PC-3 (cell line): ENCODE measurements at regions of chr3 and their contacts with region 1.

Region 1: GRCh38 chr3:149553781-149554451 is 79.4 kb downstream of the TM4SF4 start:
- DNase-seq: no peak
- ATAC-seq: no peak
- H3K4me3 ChIP-seq: peak overlapping the region; percentile 16; the same call in 1 of the 2 replicates
- H3K27ac ChIP-seq: peak overlapping the region; percentile 93
- H3K4me1 ChIP-seq: peaks cover 51% of the 10 kb centered on the region
- H3K27me3 ChIP-seq: no peaks in the 10 kb centered on the region
- CTCF ChIP-seq: no peak

Region 2: DNA sequence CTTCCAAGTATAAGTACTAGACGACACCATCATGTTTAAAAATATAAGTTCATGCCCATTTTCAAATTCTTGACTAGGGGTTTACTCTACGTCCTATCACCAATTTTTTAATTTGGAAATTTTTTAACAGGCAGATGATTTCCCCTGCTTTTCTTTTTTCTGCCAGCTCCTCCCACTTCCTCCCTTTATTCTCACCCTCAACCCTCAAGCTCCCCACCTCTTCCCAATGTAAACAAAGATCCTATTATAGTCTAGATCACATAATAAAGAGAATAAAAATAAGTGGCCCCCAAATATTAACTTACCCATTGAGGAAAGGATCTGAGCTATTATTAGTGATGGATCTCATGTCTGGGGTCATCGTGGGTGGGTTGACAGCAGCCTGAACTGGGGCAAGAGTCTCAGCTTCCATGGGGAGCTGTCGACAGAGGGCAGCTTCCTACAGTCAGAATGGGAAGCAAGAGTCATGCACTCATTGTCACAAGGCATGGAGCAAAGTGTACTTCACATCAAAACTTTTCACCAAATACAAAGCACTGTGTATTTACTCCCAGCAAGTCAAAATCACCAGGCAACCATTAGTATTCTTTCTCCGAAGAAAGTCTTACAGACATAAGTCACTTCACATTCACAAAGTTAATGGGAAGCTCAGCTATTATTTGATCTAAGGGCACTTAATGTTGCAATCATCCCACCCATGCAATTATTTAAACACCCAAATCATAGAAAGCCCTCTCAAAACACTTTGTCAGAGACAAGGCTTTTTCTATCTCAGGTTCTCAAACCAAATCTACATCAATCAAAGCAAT is 26.2 kb before region 1 on chr3:
- CTCF ChIA-PET with region 1: no interaction called
- POLR2A ChIA-PET with region 1: interaction called, 3 read pairs
- intact Hi-C with region 1: loop called (anchors 1 kb)
- DNase-seq: no peak
- ATAC-seq: no peak
- H3K4me3 ChIP-seq: no peak overlapping the region
- H3K27ac ChIP-seq: no peak overlapping the region
- H3K4me1 ChIP-seq: no peaks in the 10 kb centered on the region
- H3K27me3 ChIP-seq: no peaks in the 10 kb centered on the region
- CTCF ChIP-seq: no peak

Region 3: GRCh38 chr3:149541091-149541491 is 12.8 kb before region 1 on chr3:
- CTCF ChIA-PET with region 1: no interaction called
- POLR2A ChIA-PET with region 1: interaction called, 4 read pairs
- intact Hi-C with region 1: loop called (anchors 1 kb)
- DNase-seq: no peak
- ATAC-seq: peak; percentile 54
- H3K4me3 ChIP-seq: no peak overlapping the region
- H3K27ac ChIP-seq: peak overlapping the region; percentile 18
- H3K4me1 ChIP-seq: peaks cover 15% of the 10 kb centered on the region
- H3K27me3 ChIP-seq: no peaks in the 10 kb centered on the region
- CTCF ChIP-seq: no peak; the same call in 1 of the 2 replicates

Region 4: GRCh38 chr3:149575961-149576564 is 22.1 kb after region 1 on chr3:
- CTCF ChIA-PET with region 1: interaction called, 3 read pairs
- POLR2A ChIA-PET with region 1: interaction called, 10 read pairs
- intact Hi-C with region 1: loop called (anchors 1 kb)
- DNase-seq: peak; percentile 98
- ATAC-seq: peak; percentile 62
- H3K4me3 ChIP-seq: peak overlapping the region; percentile 55
- H3K27ac ChIP-seq: peak overlapping the region; percentile 99
- H3K4me1 ChIP-seq: peaks cover 92% of the 10 kb centered on the region
- H3K27me3 ChIP-seq: no peaks in the 10 kb centered on the region
- CTCF ChIP-seq: no peak

Region 5: DNA sequence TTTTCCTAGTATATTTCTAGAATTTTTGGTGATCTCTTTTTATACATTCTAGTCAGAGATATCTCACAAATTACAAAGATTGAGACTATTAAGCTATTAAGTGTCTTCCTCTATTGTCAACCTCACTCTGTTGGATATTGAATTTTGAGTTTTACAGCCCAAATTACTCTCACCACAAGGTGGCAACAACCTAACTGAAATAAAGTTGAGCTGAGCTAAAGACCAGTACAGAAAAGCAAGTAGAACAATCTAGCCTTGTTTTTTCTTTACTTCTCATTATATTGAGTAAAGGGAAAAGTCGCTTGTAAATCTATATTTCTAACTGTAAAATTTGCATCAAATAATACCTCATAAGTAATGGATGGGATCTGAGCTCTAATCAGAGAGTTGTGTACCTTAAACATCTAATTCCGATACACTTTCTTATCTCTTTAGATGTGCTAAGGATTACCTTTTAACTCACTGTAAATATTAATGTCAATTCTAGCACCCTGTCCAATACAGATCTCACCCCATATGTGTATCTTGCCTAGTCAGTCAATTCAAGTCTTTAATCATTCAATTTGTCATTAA is 211.9 kb after region 1 on chr3:
- CTCF ChIA-PET with region 1: interaction called, 11 read pairs
- POLR2A ChIA-PET with region 1: interaction called, 4 read pairs
- intact Hi-C with region 1: no loop called
- DNase-seq: peak; percentile 59
- ATAC-seq: peak; percentile 59
- H3K4me3 ChIP-seq: no peak overlapping the region
- H3K27ac ChIP-seq: no peak overlapping the region
- H3K4me1 ChIP-seq: no peaks in the 10 kb centered on the region
- H3K27me3 ChIP-seq: 0 out of 2 replicates have a peak, but pooled peaks cover 4% of the 10 kb centered on the region
- CTCF ChIP-seq: peak; percentile 74

Region 6: GRCh38 chr3:149975919-149976318 is 422.0 kb after region 1 on chr3:
- CTCF ChIA-PET with region 1: no interaction called
- POLR2A ChIA-PET with region 1: no interaction called
- intact Hi-C with region 1: no loop called
- DNase-seq: no peak
- ATAC-seq: no peak
- H3K4me3 ChIP-seq: no peak overlapping the region
- H3K27ac ChIP-seq: no peak overlapping the region
- H3K4me1 ChIP-seq: 0 out of 2 replicates have a peak, but pooled peaks cover 9% of the 10 kb centered on the region
- H3K27me3 ChIP-seq: no peaks in the 10 kb centered on the region
- CTCF ChIP-seq: 0 out of 2 replicates have a peak, but pooled peaks have one; percentile 33